Lower leg skin (tissue), 4 donors: ENCODE measurements at regions of chr18 and their contacts with region 1.

Region 1: GRCh38 chr18:24600076-24600654 is 139.7 kb downstream of the HRH4 start:
- DNase-seq: no peak
- H3K4me3 ChIP-seq: no peak overlapping the region
- CTCF ChIP-seq: no peak
- POLR2A ChIP-seq: no peak

Region 2: DNA sequence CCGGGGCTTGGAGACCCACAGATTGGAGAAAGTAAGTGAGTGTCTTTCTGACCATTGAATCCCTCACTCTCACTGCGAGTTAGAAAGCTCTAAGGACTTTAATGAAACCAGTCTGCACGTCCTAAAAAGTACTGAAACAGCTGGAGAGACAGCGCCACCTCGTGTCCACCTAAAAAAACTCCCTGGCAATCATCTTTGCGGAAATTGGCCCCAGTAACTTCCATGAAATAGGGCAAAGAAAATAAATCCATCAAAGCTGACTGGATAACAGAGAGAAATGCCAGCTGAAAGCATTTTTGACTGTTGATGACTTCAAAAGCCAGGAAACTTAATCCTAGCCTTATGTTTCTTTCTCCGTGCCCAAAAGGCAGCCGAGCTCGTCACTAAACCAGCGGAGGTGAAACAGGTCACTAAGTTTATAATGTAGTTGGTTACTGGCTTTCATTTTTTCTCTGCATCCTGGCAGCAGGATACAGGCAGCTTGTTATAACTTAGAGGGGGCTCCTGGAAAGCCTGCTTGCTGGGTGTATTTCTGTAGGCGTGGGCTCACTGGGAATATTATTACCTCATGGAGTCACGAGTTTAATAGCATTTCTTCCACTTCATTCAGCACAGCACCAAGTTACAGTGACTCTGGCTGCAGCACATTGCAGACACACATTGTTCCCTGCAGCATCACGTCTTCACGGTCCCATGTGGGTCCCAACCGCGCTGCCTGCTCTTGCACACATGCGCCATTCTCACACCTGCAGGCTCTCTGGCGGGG is 126.7 kb after region 1 on chr18:
- intact Hi-C with region 1: loop called (anchors 10 kb)
- DNase-seq: peak; percentile 39 to 90
- H3K4me3 ChIP-seq: no peak overlapping the region
- CTCF ChIP-seq: peak in 1 of 3 donors; percentile 23
- POLR2A ChIP-seq: no peak